ENCODE measurements at regions of chr4 and their contacts with region 1.

Region 1: GRCh38 chr4:119559044-119559647 is 69.5 kb downstream of the PDE5A start:
- DNase-seq: no peak
- H3K4me3 ChIP-seq: no peak overlapping the region
- H3K27ac ChIP-seq: no peak overlapping the region
- H3K4me1 ChIP-seq: no peaks in the 10 kb centered on the region
- H3K27me3 ChIP-seq: no peaks in the 10 kb centered on the region
- CTCF ChIP-seq: peak in 5 of 6 experiments; percentile 21 to 47 (median 37)
- POLR2A ChIP-seq: no peak

Region 2: GRCh38 chr4:119162174-119162573 is 397.0 kb before region 1 on chr4:
- intact Hi-C with region 1: no loop called
- DNase-seq: no peak
- H3K4me3 ChIP-seq: no peak overlapping the region
- H3K27ac ChIP-seq: no peak overlapping the region
- H3K4me1 ChIP-seq: no peaks in the 10 kb centered on the region
- H3K27me3 ChIP-seq: no peaks in the 10 kb centered on the region
- CTCF ChIP-seq: no peak
- POLR2A ChIP-seq: no peak

Region 3: GRCh38 chr4:119313237-119313636 is 245.9 kb before region 1 on chr4:
- intact Hi-C with region 1: no loop called
- DNase-seq: no peak
- H3K4me3 ChIP-seq: no peak overlapping the region
- H3K27ac ChIP-seq: no peak overlapping the region
- H3K4me1 ChIP-seq: peaks cover 0 to under 1% (median 0%) of the 10 kb centered on the region in 3 donors
- H3K27me3 ChIP-seq: no peaks in the 10 kb centered on the region
- CTCF ChIP-seq: no peak
- POLR2A ChIP-seq: no peak

Region 4: DNA sequence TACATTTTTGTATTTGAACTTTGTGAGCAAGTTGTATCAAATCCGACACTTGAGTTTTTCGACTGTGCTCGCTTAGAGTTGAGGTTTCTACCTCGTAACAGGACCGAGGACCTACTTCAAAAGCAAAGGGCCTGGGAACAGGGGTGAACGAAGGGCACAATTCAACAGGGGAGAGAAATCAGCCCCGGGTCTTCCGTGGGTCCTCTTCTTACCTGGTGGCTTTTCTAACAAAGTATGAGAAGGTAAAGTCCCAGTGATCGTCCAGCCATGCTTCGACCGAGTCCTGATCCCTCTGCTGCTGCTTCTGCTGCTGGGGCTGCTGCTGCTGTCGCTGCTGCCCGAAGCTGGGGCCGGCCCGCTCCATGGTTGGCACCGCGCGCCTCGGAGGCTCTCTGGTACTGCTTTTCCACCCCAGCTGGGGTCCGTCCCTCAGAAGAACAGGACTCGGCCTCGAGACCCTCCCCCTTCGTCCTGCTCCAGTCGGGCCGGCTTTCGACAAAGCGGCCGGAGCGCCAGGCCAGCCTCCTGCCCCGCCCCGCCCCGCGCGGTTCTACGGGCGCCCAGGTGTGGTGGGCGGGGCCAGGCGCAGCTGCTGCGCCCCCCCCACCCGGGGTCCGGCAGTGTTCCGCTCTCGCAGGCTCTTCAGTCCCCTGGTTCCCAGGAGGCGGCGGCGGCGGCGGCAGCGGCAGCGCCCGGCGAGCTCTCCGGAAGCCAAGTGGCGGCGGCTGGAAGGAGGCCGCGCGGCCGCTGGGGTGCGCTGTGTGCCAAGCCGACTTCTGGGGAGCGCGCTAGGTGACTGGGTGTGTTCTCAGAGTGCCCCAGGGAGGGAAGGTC is 69.4 kb after region 1 on chr4 and contains the start of gene PDE5A:
- intact Hi-C with region 1: loop called (anchors 10 kb)
- DNase-seq: peak; percentile 8
- H3K4me3 ChIP-seq: peak within 1 kb of the TSS; percentile 52 to 84 (median 82)
- H3K27ac ChIP-seq: peak within 1 kb of the TSS; percentile 67 to 95 (median 91)
- H3K4me1 ChIP-seq: peaks cover 0 to 26% (median 4%) of the 10 kb centered on the region in 3 donors
- H3K27me3 ChIP-seq: peaks cover 0 to 4% (median 0%) of the 10 kb centered on the region in 4 donors
- CTCF ChIP-seq: peak; percentile 48 to 87 (median 78)
- POLR2A ChIP-seq: peak in 1 of 4 donors; percentile 31
- total RNA-seq, gene PDE5A: 1.9 to 26.7 (median 6.0) TPM

Measured in esophagus squamous epithelium (tissue), 5 donors.